PC-3 (cell line): ENCODE measurements at regions of chr11 and their contacts with region 1.

Region 1: DNA sequence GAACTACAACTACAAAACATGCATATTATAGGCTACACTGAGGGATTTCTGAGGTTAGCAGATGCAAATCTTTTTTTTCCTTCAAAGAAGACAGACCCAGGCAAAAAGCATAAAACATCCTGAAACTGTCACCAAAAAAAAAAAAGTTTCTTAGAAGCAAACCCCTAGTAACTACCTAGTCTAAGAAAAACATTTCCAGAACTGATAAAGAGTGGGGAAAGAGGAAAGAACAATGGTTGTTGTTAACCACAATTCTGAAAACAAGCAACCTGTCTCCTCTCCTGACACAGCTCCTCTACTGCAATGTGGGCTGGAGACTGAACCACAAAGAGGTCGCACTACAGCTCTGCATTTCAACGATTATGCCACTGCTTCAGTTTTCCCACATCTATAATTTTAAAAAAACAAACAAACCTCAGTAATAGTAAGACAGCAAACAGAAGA is 15.0 kb downstream of the DENND5A start:
- DNase-seq: no peak
- ATAC-seq: no peak
- H3K4me3 ChIP-seq: no peak overlapping the region
- H3K27ac ChIP-seq: no peak overlapping the region
- H3K4me1 ChIP-seq: peaks cover 5% of the 10 kb centered on the region; the same call in 1 of the 2 replicates
- H3K27me3 ChIP-seq: no peaks in the 10 kb centered on the region
- CTCF ChIP-seq: no peak

Region 2: GRCh38 chr11:8989453-8989852 is 260.7 kb before region 1 on chr11:
- CTCF ChIA-PET with region 1: no interaction called
- POLR2A ChIA-PET with region 1: interaction called, 11 read pairs
- intact Hi-C with region 1: no loop called
- DNase-seq: peak; percentile 15
- ATAC-seq: no peak
- H3K4me3 ChIP-seq: no peak overlapping the region
- H3K27ac ChIP-seq: no peak overlapping the region
- H3K4me1 ChIP-seq: peaks cover 7% of the 10 kb centered on the region; the same call in 1 of the 2 replicates
- H3K27me3 ChIP-seq: no peaks in the 10 kb centered on the region
- CTCF ChIP-seq: no peak

Region 3: GRCh38 chr11:9473408-9473807 is 223.2 kb after region 1 on chr11:
- CTCF ChIA-PET with region 1: interaction called, 11 read pairs
- POLR2A ChIA-PET with region 1: no interaction called
- intact Hi-C with region 1: no loop called
- DNase-seq: no peak
- ATAC-seq: no peak
- H3K4me3 ChIP-seq: no peak overlapping the region
- H3K27ac ChIP-seq: no peak overlapping the region
- H3K4me1 ChIP-seq: no peaks in the 10 kb centered on the region
- H3K27me3 ChIP-seq: no peaks in the 10 kb centered on the region
- CTCF ChIP-seq: no peak